Activated T-helper 1 cell treated with anti-CD3 and anti-CD28 coated beads, Interleukin-12 subunit alpha, Interleukin-12 subunit beta, Interleukin-2, Interleukin-4 antibody, amounts not matched to agents 30 ng/mL and 10 ng/mL and 1 ng/mL, durations not matched to agents 14 hours and 24 hours and 36 hours (primary cell): ENCODE measurements at regions of chr17 and their contacts with region 1.

Region 1: DNA sequence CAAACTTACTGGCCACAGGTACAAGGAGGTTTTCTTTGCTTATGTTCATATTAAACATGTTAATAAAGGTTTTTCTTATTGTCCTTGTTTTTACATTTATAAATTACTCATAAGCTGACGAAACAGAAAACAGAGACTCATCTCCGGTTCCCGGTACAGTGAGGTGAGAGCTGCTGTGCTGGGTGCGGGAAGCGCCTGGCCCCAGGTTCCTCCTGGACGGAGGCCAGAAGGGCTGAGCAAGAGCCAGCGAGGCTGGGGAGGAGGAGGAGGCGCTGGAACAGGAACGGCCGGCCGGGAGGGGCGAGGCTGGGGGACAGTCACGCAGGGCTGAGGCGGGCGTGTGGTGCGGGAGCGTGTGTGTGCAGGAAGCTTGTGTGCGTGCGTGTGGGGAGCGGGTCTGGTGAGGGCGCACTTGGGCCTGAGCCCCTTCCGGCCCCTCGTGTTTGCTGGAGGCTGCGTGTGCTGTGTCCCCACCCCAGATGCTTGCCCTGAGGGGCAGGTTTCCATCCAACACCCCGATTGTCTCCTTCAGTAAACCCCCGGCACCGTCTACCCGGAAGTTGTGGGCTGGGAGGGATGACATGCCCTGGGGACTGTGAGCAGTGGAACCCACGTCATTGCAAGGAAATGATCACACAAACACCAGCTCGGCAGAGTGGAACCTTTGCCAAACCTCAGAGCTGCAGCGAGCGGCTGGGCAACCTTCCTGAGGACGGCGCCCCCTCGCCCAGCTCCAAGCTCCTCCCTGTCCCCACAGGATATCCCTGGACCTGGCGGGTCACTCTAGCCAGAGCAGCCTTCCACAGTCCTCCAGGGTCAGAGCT is 19.5 kb downstream of the CD7 start:
- DNase-seq: peak; percentile 91
- H3K4me3 Mint-ChIP-seq: peak overlapping the region; percentile 89
- H3K27ac Mint-ChIP-seq: peak overlapping the region; percentile 98
- H3K4me1 Mint-ChIP-seq: peaks cover 85% of the 10 kb centered on the region
- H3K27me3 Mint-ChIP-seq: no peaks in the 10 kb centered on the region

Region 2: DNA sequence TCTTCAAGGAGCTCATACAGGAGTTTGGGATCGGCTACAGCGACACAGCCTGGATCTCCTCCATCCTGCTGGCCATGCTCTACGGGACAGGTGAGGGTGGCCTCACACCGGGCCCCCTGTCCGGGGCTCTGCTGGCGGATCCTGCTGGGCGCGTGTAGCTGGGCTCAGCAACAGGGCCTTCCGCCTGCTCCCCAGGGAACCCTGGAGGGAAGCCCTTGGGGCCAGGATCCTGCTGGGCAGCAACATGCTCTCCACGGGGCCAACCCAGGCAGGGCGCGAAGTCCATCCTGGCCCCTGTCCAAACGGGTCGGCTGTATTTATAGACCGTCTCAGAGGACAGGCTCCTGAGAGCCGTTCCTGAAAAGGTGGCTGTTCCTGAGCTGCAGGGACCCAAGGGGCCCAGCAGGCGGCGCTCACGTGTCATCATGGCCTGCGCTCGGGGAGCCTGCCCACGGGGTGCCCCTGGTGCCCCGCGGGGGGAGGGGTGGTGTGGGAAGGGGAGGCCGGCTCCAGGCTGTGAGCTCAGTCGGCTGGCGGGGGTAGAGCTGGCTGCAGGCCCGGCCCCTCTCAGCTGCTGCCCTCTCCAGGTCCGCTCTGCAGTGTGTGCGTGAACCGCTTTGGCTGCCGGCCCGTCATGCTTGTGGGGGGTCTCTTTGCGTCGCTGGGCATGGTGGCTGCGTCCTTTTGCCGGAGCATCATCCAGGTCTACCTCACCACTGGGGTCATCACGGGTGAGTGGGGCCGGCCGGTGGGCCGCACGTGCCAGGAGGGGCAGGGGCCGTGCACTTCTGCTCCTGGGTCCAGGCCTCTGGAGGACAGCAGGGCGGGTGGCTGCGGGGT is 61.6 kb before region 1 on chr17:
- intact Hi-C with region 1: loop called (anchors 1 kb)
- DNase-seq: peak; percentile 60
- H3K4me3 Mint-ChIP-seq: no peak overlapping the region
- H3K27ac Mint-ChIP-seq: no peak overlapping the region
- H3K4me1 Mint-ChIP-seq: peaks cover 30% of the 10 kb centered on the region
- H3K27me3 Mint-ChIP-seq: no peaks in the 10 kb centered on the region

Region 3: GRCh38 chr17:82257473-82257872 is 40.5 kb before region 1 on chr17:
- intact Hi-C with region 1: no loop called
- DNase-seq: no peak
- H3K4me3 Mint-ChIP-seq: no peak overlapping the region
- H3K27ac Mint-ChIP-seq: peak overlapping the region; percentile 25
- H3K4me1 Mint-ChIP-seq: peaks cover 8% of the 10 kb centered on the region
- H3K27me3 Mint-ChIP-seq: no peaks in the 10 kb centered on the region

Region 4: GRCh38 chr17:82315703-82316358 is 17.9 kb after region 1 on chr17:
- intact Hi-C with region 1: loop called (anchors 1 kb)
- DNase-seq: peak; percentile 31
- H3K4me3 Mint-ChIP-seq: peak overlapping the region; percentile 97
- H3K27ac Mint-ChIP-seq: no peak overlapping the region
- H3K4me1 Mint-ChIP-seq: peaks cover 5% of the 10 kb centered on the region
- H3K27me3 Mint-ChIP-seq: no peaks in the 10 kb centered on the region

Region 5: GRCh38 chr17:82320956-82321927 is 23.3 kb after region 1 on chr17:
- intact Hi-C with region 1: loop called (anchors 1 kb)
- DNase-seq: peak; percentile 71
- H3K4me3 Mint-ChIP-seq: peak overlapping the region; percentile 94
- H3K27ac Mint-ChIP-seq: peak overlapping the region; percentile 99
- H3K4me1 Mint-ChIP-seq: peaks cover 18% of the 10 kb centered on the region
- H3K27me3 Mint-ChIP-seq: no peaks in the 10 kb centered on the region

Region 6: DNA sequence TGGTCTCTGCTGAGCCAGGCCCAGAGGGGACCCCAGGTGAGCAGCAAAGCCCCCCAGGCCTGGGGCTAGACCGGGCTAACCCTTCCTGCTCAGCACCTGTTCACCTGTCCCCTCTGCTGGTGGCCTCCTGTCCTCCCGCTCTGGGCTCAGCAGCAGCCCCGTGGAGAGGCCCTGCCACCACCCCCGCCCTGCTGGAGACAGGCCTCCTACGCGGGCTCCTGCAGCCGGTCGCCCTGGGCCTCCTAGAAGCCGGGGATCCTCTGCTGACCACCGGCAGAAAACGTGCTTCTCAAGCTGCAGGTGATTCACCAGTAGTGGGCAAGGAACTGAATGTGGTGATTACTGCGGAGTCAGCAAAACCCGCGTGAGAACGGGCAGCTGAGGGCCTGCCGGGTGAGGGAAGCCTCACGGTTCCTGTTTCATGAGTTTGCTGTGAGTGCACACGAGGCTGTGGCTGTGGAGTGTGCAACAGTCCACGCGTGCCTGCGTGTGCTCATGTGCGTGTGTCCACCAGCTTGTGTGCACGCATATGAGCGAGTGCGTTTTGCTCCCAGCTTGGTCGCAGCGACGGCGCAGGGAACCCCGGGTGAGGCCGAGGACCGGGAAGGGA is 34.8 kb after region 1 on chr17:
- intact Hi-C with region 1: loop called (anchors 1 kb)
- DNase-seq: no peak
- H3K4me3 Mint-ChIP-seq: peak overlapping the region; percentile 81
- H3K27ac Mint-ChIP-seq: peak overlapping the region; percentile 18
- H3K4me1 Mint-ChIP-seq: peaks cover 23% of the 10 kb centered on the region
- H3K27me3 Mint-ChIP-seq: peaks cover 7% of the 10 kb centered on the region

Region 7: DNA sequence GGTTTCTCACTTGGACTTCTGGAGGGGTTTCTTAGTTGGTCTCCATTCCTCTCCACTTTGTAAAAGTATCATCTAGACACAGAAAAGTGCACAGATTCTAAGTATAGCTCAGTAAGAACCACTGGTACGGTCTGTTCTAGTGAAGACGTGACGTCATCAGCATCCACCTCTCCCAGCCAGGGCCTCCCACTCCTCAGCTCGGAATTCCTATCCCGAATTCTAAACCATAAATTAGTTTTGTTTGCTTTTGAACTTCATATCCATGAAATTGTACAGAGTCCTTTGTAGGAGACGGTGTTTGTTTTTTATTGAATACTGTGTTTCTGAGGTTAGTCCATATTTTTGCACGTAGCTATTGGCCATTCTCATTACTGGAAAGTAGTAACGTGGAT is 247.1 kb after region 1 on chr17:
- intact Hi-C with region 1: no loop called
- DNase-seq: no peak
- H3K4me3 Mint-ChIP-seq: no peak overlapping the region
- H3K27ac Mint-ChIP-seq: no peak overlapping the region
- H3K4me1 Mint-ChIP-seq: peaks cover 30% of the 10 kb centered on the region
- H3K27me3 Mint-ChIP-seq: no peaks in the 10 kb centered on the region